ENCODE measurements at regions of chr12 and their contacts with region 1.

Region 1: GRCh38 chr12:92338671-92339070 is 193.0 kb upstream of the BTG1 start:
- DNase-seq: no peak
- H3K4me3 ChIP-seq: no peak overlapping the region
- H3K27ac ChIP-seq: no peak overlapping the region
- H3K4me1 ChIP-seq: no peaks in the 10 kb centered on the region
- H3K27me3 ChIP-seq: no peaks in the 10 kb centered on the region
- CTCF ChIP-seq: no peak
- POLR2A ChIP-seq: no peak

Region 2: GRCh38 chr12:91902860-91903683 is 435.6 kb before region 1 on chr12:
- intact Hi-C with region 1: no loop called
- DNase-seq: no peak
- H3K4me3 ChIP-seq: no peak overlapping the region
- H3K27ac ChIP-seq: no peak overlapping the region
- H3K4me1 ChIP-seq: no peaks in the 10 kb centered on the region
- H3K27me3 ChIP-seq: no peaks in the 10 kb centered on the region
- CTCF ChIP-seq: no peak
- POLR2A ChIP-seq: no peak

Region 3: DNA sequence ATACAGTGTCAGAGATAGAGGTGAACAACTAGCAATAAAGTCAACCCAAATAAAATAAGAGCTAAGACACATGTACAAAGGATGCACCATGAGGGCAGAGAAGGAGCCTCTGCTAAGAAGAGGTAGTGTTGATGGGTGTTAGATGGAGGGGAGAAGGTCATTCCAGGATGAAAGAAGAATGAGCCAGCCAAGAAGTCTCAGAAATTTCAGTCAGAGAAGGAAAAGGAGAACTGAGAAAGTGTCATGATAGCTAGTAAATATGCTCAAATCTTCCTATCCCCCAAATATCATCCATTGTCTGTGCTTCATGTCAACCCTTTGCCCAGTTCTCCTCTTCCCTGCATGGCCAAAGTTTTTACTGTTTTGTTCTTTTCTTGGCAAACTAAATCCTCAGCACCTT is 32.2 kb after region 1 on chr12:
- intact Hi-C with region 1: loop called (anchors 2 kb)
- DNase-seq: no peak
- H3K4me3 ChIP-seq: no peak overlapping the region
- H3K27ac ChIP-seq: no peak overlapping the region
- H3K4me1 ChIP-seq: no peaks in the 10 kb centered on the region
- H3K27me3 ChIP-seq: no peaks in the 10 kb centered on the region
- CTCF ChIP-seq: no peak
- POLR2A ChIP-seq: no peak

Measured in breast epithelium (tissue), 4 donors.